ENCODE measurements at regions of chr1 and their contacts with region 1.

Region 1: GRCh38 chr1:112605633-112606327 is 13.2 kb downstream of the ST7L start:
- DNase-seq: no peak
- ATAC-seq: no peak

Region 2: GRCh38 chr1:112133487-112133886 is 472.3 kb before region 1 on chr1:
- intact Hi-C with region 1: no loop called
- DNase-seq: no peak
- ATAC-seq: no peak

Region 3: DNA sequence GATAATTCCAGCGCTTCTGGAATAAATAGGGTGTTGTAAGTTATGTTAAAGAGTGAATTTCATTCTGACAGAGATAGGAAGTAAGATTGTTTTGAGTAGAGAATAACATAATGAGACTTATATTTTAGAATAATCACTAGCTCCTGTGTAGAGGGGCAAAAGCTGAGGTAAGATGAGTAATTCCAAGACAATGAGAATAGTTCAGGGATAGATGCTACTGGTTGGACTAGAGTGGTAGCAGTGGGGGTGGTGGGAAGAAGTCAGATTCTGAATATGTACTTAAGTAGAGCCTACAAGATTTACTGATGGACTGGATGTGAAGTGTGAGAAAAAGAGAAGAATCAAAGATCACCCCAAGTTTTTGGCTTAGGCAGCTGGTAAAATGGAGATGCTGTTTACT is 45.4 kb after region 1 on chr1:
- intact Hi-C with region 1: loop called in 1 of 2 experiments (anchors 10 kb)
- DNase-seq: no peak
- ATAC-seq: no peak

Measured in left cardiac atrium (tissue), 4 donors.